OCI-LY7 (cell line): ENCODE measurements at regions of chr5 and their contacts with region 1.

Region 1: GRCh38 chr5:1830571-1831228 is 29.5 kb downstream of the NDUFS6 start:
- DNase-seq: no peak
- H3K4me3 ChIP-seq: no peak overlapping the region
- H3K27ac ChIP-seq: no peak overlapping the region
- H3K4me1 ChIP-seq: no peaks in the 10 kb centered on the region
- CTCF ChIP-seq: no peak

Region 2: DNA sequence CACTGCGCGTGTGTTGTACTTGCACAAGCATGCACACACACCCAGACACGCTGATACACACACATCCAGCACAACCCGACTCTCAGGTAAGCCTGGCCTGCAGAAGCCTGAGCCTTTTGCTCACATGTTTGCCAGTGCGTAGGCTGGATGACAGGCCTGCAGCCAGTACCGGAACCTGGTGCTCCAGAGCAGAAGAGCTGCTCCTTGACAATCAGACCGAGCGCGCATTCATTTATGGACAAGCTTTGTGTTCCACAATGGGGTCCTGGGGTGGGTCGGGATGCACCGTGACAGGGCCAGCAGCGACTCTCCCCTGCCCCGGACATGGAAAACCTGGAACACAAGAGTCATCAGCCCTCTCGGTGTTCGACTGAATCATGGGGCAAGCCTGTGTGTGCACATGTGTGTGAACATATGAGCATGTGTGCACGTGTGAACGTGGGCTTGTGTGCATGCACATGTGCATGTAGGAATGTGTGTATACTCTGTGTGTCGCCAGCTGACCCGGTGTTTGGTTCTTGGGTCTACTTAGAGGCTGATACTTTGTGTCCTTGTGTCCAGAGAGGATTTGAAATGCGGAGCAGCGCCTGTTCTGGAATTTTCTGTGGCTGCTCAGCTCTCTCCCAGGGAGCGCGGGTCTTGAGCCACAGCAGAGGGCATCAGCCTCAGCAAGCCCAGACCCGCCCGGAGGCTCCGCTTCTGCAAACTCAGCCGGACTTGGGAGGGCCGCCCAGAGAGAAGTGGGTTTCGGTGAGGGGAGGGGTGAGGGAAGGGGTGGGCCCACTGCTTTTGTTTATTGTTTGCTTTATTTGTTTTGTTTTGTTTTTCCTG is 19.8 kb after region 1 on chr5:
- CTCF ChIA-PET with region 1: no interaction called
- POLR2A ChIA-PET with region 1: no interaction called
- intact Hi-C with region 1: loop called (anchors 1 kb)
- DNase-seq: no peak
- H3K4me3 ChIP-seq: no peak overlapping the region
- H3K27ac ChIP-seq: no peak overlapping the region
- H3K4me1 ChIP-seq: no peaks in the 10 kb centered on the region
- CTCF ChIP-seq: no peak

Region 3: DNA sequence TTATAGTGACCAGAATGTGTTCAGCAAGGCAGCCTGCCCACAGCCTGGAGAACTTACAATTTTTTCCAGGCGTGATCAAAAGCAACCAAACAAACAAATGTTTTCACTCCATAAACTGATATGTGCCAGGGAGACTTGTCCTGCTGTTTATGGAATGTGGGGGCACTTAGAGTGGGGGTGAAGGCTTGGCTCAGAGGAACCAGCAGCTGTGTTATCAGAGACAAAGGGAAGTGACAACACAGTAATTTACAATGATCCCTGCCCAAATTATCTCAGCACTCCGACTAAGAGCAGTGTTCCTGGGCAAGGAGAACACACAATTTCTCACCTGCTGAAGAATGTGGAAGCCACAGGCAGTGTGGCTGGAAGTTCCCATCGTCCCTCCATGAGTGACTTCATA is 481.2 kb after region 1 on chr5:
- CTCF ChIA-PET with region 1: no interaction called
- POLR2A ChIA-PET with region 1: no interaction called
- intact Hi-C with region 1: no loop called
- DNase-seq: no peak
- H3K4me3 ChIP-seq: no peak overlapping the region
- H3K27ac ChIP-seq: no peak overlapping the region
- H3K4me1 ChIP-seq: no peaks in the 10 kb centered on the region
- CTCF ChIP-seq: no peak